Activated naive CD4-positive, alpha-beta T cell treated with anti-CD3 and anti-CD28 coated beads, Interleukin-2, amount 10 ng/mL, durations not matched to agents 7 days and 5 days (primary cell): ENCODE measurements at regions of chr22 and their contacts with region 1.

Region 1: GRCh38 chr22:30396871-30397655 is at the start of gene SEC14L2:
- DNase-seq: peak; percentile 80
- H3K4me3 Mint-ChIP-seq: peak within 1 kb of the TSS; percentile 83
- H3K27ac Mint-ChIP-seq: no peak within 1 kb of the TSS
- H3K4me1 Mint-ChIP-seq: peaks cover 51% of the 10 kb centered on the region
- H3K27me3 Mint-ChIP-seq: peaks cover 25% of the 10 kb centered on the region

Region 2: DNA sequence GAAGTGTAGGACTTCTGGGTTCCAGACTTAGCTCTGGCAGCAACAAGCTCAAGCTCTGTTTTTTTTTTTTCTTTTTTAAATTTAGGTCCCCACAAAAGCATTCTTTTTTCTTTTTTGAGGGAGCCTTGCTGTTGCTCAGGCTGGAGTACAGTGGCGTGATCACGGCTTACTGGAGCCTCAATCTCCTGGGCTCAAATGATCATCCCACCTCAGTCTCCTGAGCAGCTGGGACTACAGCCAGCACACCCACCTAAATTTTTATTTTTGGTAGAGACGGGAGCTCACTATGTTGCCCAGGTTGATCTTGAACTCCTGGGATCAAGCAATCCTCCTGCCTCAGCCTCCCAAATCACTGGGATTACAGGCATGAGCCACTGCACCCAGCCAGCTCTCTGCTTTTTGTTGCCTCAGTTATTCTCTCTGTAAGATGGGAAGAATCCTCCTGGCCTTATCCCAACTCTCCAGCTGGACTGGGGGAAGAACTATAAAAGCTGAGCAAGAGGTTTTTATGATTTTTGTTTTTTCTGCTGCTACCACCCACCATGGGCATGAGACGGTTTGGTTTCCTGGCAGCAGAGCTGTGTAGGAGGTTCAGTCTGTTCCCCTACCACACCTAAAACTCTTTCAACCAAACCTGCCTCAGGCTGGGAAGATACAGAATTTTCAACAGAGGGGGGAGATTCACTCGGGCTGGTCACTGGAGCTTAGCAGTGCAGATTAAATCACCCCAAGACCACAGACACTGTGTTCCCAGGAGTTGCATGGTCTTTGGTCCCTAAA is 16.9 kb after region 1 on chr22:
- CTCF ChIA-PET with region 1: interaction called, 10 read pairs
- DNase-seq: no peak
- H3K4me3 Mint-ChIP-seq: no peak overlapping the region
- H3K27ac Mint-ChIP-seq: peak overlapping the region; percentile 49
- H3K4me1 Mint-ChIP-seq: peaks cover 15% of the 10 kb centered on the region
- H3K27me3 Mint-ChIP-seq: no peaks in the 10 kb centered on the region